Dorsolateral prefrontal cortex (tissue), 120 donors: ENCODE measurements at regions of chr1 and their contacts with region 1.

Region 1: GRCh38 chr1:193406901-193407300 is 220.5 kb upstream of the B3GALT2 start:
- DNase-seq: no peak
- H3K4me3 ChIP-seq: no peak overlapping the region
- H3K27ac ChIP-seq: no peak overlapping the region
- H3K27me3 ChIP-seq: no peaks in the 10 kb centered on the region
- CTCF ChIP-seq: peak; percentile 60 to 87 (median 73)

Region 2: GRCh38 chr1:193185901-193186731 is 220.8 kb before region 1 on chr1 and contains the start of gene B3GALT2:
- intact Hi-C with region 1: loop called in 1 of 2 experiments (anchors 5 kb)
- DNase-seq: peak in 8 of 10 donors; percentile 19 to 85 (median 53)
- H3K4me3 ChIP-seq: peak within 1 kb of the TSS; percentile 38 to 79 (median 63)
- H3K27ac ChIP-seq: peak within 1 kb of the TSS; percentile 71 to 98 (median 92)
- H3K27me3 ChIP-seq: no peaks in the 10 kb centered on the region
- CTCF ChIP-seq: peak in 6 of 56 donors; percentile 7 to 26 (median 17)
- total RNA-seq, gene B3GALT2: 7.6 to 55.7 (median 31.2) TPM

Region 3: DNA sequence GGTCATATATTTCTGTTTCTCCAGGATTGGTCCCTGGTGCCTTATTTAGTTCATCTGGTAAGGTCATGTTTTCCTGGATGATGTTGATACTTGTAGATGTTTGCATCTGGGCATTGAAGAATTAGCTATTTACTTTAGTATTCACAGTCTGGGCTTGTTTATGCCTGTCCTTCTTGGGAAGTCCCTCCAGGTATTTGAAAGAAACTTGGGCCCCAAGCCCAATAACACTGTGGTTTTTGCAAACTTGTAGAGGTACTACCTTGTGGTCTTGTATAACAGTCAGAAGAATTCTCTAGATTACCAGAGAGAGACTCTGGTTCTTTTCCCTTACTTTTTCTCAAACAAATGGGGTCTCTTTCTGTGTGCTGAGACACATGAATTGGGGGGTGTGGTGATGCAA is 30.9 kb after region 1 on chr1:
- intact Hi-C with region 1: no loop called
- DNase-seq: no peak
- H3K4me3 ChIP-seq: no peak overlapping the region
- H3K27ac ChIP-seq: no peak overlapping the region
- H3K27me3 ChIP-seq: no peaks in the 10 kb centered on the region
- CTCF ChIP-seq: no peak